GM12878 (cell line): ENCODE measurements at regions of chr3 and their contacts with region 1.

Region 1: DNA sequence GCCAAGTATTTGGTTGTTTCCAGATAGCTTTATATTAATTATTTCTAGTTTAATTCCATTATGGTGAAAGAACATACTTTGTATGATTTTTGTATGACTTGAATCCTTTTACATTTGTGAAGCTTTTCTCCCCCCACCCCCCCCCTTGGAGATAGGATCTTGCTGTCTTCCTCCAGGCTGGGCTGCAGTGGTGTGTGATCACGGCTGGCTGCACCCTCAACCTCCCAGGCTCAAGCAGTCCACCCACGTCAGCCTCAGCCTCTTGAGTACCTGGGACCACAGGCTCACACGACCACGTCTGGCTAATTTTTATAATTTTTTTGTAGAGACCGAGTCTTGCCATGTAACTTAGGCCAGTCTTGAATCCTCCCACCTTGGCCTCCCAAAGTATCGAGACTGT is 29.5 kb downstream of the ARL8B start:
- DNase-seq: no peak
- ATAC-seq: peak; percentile 55
- H3K4me3 ChIP-seq: no peak overlapping the region
- H3K27ac ChIP-seq: no peak overlapping the region; the same call in 1 of the 2 replicates
- H3K4me1 ChIP-seq: peaks cover 11% of the 10 kb centered on the region
- H3K27me3 ChIP-seq: no peaks in the 10 kb centered on the region
- CTCF ChIP-seq: no peak
- EP300 ChIP-seq: no peak
- POLR2A ChIP-seq: no peak
- RAD21 ChIP-seq: no peak

Region 2: GRCh38 chr3:5071061-5071460 is 80.5 kb before region 1 on chr3:
- CTCF ChIA-PET with region 1: no interaction called
- POLR2A ChIA-PET with region 1: no interaction called
- RAD21 ChIA-PET with region 1: no interaction called
- SMC1A ChIA-PET with region 1: no interaction called
- in situ Hi-C with region 1: no loop called
- intact Hi-C with region 1: no loop called
- DNase-seq: no peak
- ATAC-seq: peak; percentile 43; the same call in 2 of the 3 replicates
- H3K4me3 ChIP-seq: no peak overlapping the region
- H3K27ac ChIP-seq: no peak overlapping the region
- H3K4me1 ChIP-seq: no peaks in the 10 kb centered on the region
- H3K27me3 ChIP-seq: peaks cover 0 to 2% of the 10 kb centered on the region in 2 experiments; a peak in 2 of 4 replicates
- CTCF ChIP-seq: no peak
- EP300 ChIP-seq: no peak
- POLR2A ChIP-seq: no peak
- RAD21 ChIP-seq: no peak

Region 3: DNA sequence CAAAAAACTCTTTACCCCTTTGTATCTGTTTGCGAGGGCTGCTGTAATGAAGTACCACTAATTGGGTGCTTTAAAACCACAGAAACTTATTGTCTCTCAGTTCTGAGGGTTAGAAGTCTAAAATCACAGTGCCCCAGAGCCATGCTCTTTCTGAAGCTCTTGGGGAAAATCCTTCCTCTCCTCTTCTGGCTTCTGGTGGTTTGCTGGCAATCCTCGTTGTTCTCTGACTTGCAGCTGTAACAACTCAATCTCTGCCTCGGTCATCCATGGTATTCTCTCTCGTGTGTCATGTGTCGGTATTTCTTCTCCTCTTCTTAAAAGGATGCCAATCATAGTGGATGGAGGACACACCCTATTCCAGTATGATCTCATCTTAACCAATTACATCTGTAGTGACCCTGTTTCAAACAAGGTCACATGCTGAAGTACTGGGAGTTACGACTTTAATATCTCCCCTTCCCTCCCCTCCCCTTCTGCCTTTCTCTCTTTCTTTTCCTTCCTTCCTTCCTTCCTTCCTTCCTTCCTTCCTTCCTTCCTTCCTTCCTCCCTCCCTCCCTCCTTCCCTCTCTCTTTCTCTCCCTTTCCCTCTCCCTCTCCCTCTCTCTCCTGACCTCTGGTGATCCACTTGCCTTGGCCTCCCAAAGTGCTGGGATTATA is 36.0 kb before region 1 on chr3:
- CTCF ChIA-PET with region 1: no interaction called
- POLR2A ChIA-PET with region 1: no interaction called
- RAD21 ChIA-PET with region 1: no interaction called
- SMC1A ChIA-PET with region 1: no interaction called
- in situ Hi-C with region 1: no loop called
- intact Hi-C with region 1: no loop called
- DNase-seq: no peak
- ATAC-seq: peak; percentile 94
- H3K4me3 ChIP-seq: no peak overlapping the region
- H3K27ac ChIP-seq: no peak overlapping the region
- H3K4me1 ChIP-seq: peaks cover 5% of the 10 kb centered on the region; the same call in 1 of the 2 replicates
- H3K27me3 ChIP-seq: no peaks in the 10 kb centered on the region
- CTCF ChIP-seq: no peak
- EP300 ChIP-seq: no peak
- POLR2A ChIP-seq: no peak
- RAD21 ChIP-seq: no peak

Region 4: GRCh38 chr3:5162102-5162501 is 10.5 kb after region 1 on chr3:
- CTCF ChIA-PET with region 1: interaction called, 3 read pairs
- POLR2A ChIA-PET with region 1: interaction called, 3 read pairs
- RAD21 ChIA-PET with region 1: interaction called, 3 read pairs
- SMC1A ChIA-PET with region 1: interaction called, 14 read pairs
- in situ Hi-C with region 1: no loop called
- intact Hi-C with region 1: no loop called
- DNase-seq: no peak
- ATAC-seq: peak; percentile 19
- H3K4me3 ChIP-seq: no peak overlapping the region
- H3K27ac ChIP-seq: no peak overlapping the region
- H3K4me1 ChIP-seq: peaks cover 17% of the 10 kb centered on the region
- H3K27me3 ChIP-seq: no peaks in the 10 kb centered on the region
- CTCF ChIP-seq: no peak
- EP300 ChIP-seq: no peak
- POLR2A ChIP-seq: no peak
- RAD21 ChIP-seq: no peak